T-cell (primary cell): ENCODE measurements at regions of chr3 and their contacts with region 1.

Region 1: DNA sequence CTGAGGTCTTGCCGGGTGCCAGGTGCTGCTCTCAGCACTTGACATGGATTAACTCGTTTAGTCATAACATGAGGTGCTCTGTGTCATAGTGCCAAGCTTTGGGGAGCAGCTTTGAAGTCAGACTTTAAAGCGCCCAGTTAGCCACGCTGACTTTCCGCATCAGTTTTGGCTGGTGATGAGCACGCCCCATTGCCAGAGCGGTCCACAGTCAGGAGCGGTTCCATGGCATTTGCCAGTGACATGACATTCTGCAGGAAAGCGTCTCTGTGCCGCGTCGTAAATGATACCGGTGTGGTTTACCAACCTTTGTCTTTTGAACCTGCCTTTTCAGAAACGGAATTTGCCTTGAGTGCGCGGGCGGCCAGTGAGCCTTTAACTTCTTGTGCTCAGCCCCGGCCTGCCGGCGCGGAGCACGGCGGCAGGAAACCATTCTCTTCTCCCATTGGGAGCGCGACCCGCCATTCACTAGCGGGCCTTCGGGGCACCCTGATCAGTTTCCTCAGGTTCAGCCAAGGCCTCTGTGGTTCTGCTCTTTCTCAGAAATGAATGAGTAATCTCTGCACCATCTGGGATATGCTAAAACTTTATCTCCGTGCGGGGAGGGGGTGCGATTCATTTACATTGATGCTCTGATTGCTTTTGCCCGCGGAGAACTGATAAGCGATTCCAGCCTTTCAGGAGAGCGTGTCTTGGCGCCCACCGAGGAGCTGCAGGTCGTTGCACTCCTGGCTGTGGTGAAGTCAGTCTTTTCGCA is 1.7 kb upstream of the SLC2A2 start:
- DNase-seq: peak in 30 of 35 experiments; percentile 2 to 45 (median 12)
- ATAC-seq: peak; percentile 63 to 80 (median 72)
- H3K4me3 ChIP-seq: peak overlapping the region; percentile 1 to 55
- H3K4me3 Mint-ChIP-seq: no peak overlapping the region
- H3K27ac ChIP-seq: no peak overlapping the region
- H3K27ac Mint-ChIP-seq: no peak overlapping the region
- H3K4me1 ChIP-seq: peaks cover 0 to 9% of the 10 kb centered on the region in 2 experiments
- H3K4me1 Mint-ChIP-seq: peaks cover 0 to 2% (median 0%) of the 10 kb centered on the region in 3 donors
- H3K27me3 ChIP-seq: peaks cover 0 to 16% of the 10 kb centered on the region in 2 experiments
- H3K27me3 Mint-ChIP-seq: peaks cover 8 to 19% of the 10 kb centered on the region in 2 donors

Region 2: DNA sequence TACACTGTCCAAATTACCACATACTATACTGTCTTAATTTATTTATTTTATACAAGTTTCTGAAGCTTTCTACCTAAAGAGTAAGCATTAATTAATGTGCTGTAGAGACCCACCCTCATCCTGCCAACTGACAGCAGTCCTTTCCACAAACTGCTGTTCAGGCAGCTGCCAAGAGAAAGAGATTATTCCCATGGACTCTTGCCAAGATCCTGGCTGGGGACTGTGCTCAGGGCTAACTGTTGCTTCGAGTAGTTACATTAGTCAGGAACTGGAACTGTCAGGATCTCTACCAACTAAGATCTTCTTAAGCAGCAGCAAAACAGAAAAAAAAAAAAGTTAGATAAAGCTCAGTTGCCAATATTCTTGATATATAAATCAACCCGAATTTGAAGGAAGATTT is 1763.5 kb before region 1 on chr3:
- CTCF ChIA-PET with region 1: no interaction called
- POLR2A ChIA-PET with region 1: no interaction called
- DNase-seq: no peak
- ATAC-seq: no peak
- H3K4me3 ChIP-seq: no peak overlapping the region
- H3K4me3 Mint-ChIP-seq: no peak overlapping the region
- H3K27ac ChIP-seq: no peak overlapping the region
- H3K27ac Mint-ChIP-seq: no peak overlapping the region
- H3K4me1 ChIP-seq: no peaks in the 10 kb centered on the region
- H3K4me1 Mint-ChIP-seq: no peaks in the 10 kb centered on the region
- H3K27me3 ChIP-seq: no peaks in the 10 kb centered on the region
- H3K27me3 Mint-ChIP-seq: peaks cover 0 to 4% of the 10 kb centered on the region in 2 donors

Region 3: GRCh38 chr3:170999737-171000242 is 28.4 kb before region 1 on chr3:
- CTCF ChIA-PET with region 1: no interaction called
- POLR2A ChIA-PET with region 1: interaction called in 1 of 2 experiments, 11 read pairs
- DNase-seq: no peak
- ATAC-seq: no peak
- H3K4me3 ChIP-seq: no peak overlapping the region
- H3K4me3 Mint-ChIP-seq: no peak overlapping the region
- H3K27ac ChIP-seq: no peak overlapping the region
- H3K27ac Mint-ChIP-seq: no peak overlapping the region
- H3K4me1 ChIP-seq: no peaks in the 10 kb centered on the region
- H3K4me1 Mint-ChIP-seq: no peaks in the 10 kb centered on the region
- H3K27me3 ChIP-seq: no peaks in the 10 kb centered on the region
- H3K27me3 Mint-ChIP-seq: no peaks in the 10 kb centered on the region